MCF 10A (cell line): ENCODE measurements at regions of chr22 and their contacts with region 1.

Region 1: DNA sequence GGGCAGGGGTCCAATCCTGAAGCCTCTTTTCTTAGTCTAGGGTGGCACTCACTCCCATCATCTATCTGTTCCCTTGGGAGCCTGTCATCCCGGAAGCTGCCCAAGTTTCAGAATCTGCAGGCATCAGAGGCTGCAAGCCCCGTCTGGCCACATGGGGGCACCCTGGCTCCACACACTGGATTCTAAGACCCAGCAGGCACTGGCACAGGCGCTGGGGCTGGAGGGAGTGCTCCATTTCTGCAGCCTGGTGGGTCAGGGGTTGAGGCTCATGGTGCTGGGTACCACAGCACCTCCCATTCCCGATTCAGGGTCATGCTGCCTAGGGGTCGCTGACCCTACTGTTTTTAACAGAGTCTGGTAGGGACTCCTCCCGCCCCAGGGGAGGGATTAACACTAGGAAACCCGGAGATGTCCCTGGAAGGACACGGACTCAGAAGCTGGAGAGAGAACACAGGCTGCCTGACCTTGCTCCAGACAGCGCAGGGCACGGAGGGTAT is 243.9 kb upstream of the SYN3 start:
- DNase-seq: peak; percentile 35
- H3K4me3 Mint-ChIP-seq: no peak overlapping the region
- H3K27ac Mint-ChIP-seq: peak overlapping the region; percentile 17
- H3K4me1 Mint-ChIP-seq: no peaks in the 10 kb centered on the region
- H3K27me3 Mint-ChIP-seq: no peaks in the 10 kb centered on the region
- CTCF ChIP-seq: peak; percentile 97

Region 2: GRCh38 chr22:33314316-33314715 is 12.2 kb after region 1 on chr22:
- CTCF ChIA-PET with region 1: interaction called, 17 read pairs
- POLR2A ChIA-PET with region 1: no interaction called
- intact Hi-C with region 1: no loop called
- DNase-seq: no peak
- H3K4me3 Mint-ChIP-seq: no peak overlapping the region
- H3K27ac Mint-ChIP-seq: peak overlapping the region; percentile 23
- H3K4me1 Mint-ChIP-seq: no peaks in the 10 kb centered on the region
- H3K27me3 Mint-ChIP-seq: no peaks in the 10 kb centered on the region
- CTCF ChIP-seq: no peak

Region 3: DNA sequence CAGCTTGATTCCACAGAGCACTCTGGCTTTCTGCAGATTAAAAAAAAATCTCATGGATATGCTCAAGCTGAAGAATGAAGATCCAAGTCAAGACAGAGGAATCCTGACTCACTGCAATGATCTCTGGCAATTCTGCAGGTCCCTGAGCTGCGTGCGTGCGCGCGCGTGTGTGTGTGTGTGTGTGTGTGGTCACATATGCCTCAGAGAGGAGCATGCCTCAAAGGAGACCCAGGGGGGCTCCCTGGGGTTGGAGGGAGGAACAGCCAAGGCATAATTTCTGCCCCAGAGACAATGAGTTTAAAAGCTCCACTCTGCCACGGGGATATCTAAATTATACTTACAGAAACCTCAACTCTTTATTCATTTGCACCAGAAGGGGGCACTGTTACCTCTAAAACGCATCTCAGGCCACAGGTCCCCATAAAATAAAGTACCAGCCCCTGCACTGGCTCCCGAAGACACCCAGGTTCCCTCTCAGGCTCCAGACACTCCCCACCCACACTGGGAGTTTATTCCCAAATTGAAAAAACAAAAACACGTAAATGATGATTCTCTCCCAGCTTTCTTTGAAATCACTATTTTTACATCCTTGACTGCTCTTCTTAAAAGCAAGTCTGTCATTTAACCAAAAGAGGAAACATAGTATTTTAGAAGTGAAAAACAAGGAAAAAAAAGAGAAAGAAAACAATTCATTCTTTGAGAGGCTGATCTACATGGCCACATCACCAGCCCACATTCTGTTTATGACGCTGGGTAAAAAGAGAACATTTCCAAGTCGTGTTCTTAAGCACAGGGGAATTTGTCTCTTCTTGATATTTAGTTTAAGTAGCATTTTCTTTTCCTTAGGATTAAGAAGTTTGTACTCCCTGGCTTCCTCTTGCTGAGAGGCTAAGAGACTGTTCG is 217.2 kb after region 1 on chr22:
- CTCF ChIA-PET with region 1: interaction called, 15 read pairs
- POLR2A ChIA-PET with region 1: no interaction called
- intact Hi-C with region 1: loop called (anchors 1 kb)
- DNase-seq: no peak
- H3K4me3 Mint-ChIP-seq: no peak overlapping the region
- H3K27ac Mint-ChIP-seq: no peak overlapping the region
- H3K4me1 Mint-ChIP-seq: no peaks in the 10 kb centered on the region
- H3K27me3 Mint-ChIP-seq: no peaks in the 10 kb centered on the region
- CTCF ChIP-seq: peak; percentile 60

Region 4: DNA sequence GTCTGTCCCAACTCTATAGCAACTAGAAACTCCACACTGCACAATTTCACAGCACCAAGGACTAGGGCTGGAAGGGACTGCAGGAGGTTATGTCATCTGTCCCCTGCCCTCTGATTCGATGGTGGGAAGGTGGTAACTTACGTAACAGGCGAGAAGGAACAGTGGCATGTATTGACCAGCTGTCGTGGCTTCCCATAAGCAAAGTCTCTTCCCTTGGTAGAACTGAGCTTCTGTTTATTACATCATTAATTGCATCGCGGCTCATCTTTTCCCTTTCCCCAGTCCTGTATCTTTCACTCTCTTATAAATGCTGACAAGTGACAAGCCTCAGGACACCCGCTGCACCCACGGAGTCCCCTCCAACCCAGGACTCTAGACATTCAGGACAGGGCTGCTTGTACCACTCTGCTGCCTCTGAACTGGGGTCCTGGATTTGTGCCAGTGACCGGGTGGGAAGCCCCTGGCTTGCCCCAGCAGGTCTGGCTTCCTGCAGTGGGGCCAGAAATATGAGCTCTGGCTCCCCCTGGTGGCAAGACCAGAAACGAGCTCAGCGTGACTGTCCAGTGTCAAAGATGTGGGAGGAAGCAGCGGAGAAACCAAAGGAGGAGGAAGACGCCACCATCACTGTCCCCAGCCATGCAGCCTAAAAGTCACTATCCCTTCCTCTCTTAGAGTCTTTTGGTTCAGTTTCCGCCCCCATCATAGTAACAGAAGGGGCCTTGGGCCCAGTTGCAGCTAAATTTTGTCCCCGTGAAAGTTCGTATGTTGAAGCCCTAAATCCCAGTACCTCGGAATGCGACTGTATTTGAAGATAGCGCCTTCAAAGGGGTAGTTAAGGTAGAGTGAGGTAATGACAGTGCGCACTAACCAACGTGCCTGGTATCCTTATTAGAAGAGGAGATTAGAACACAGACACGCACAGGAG is 1848.3 kb after region 1 on chr22:
- CTCF ChIA-PET with region 1: interaction called, 10 read pairs
- POLR2A ChIA-PET with region 1: no interaction called
- intact Hi-C with region 1: loop called (anchors 2 kb)
- DNase-seq: peak; percentile 50
- H3K4me3 Mint-ChIP-seq: no peak overlapping the region
- H3K27ac Mint-ChIP-seq: peak overlapping the region; percentile 16
- H3K4me1 Mint-ChIP-seq: no peaks in the 10 kb centered on the region
- H3K27me3 Mint-ChIP-seq: peaks cover 25% of the 10 kb centered on the region
- CTCF ChIP-seq: peak; percentile 76